ENCODE measurements at regions of chr10 and their contacts with region 1.

Region 1: DNA sequence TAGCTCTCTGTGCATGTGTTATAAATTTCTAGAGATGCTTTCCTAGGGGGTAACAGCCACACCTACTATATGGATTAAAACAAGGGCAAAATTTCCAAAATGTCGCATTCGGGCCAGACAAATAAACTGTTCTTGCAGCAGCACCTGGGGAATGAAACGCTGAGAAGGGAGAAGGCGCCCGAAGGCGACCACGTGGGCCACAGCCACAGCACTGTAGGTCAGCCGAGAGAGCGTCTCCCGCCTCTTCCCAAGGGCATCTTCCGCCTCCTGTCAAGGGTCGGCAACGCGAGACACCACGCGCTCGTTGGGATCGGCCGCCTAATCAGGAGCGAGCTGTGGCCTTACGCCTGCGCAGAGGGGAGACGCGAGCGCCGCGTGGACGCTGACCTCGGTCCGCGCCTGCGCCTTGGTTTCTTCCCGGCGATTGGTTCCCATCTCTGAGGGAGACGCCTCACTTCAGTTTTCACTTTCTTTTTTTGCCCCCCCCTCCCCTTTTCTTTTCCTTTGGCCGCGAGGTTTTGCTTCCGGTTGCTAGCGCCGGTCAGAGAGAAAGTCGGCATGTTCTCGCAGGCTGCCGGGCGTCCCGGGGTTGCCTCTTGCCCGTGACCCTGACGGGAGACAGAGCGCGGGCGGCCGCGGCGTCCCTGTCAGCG is at the start of gene TASOR2:
- DNase-seq: peak; percentile 100
- H3K4me3 ChIP-seq: peak within 1 kb of the TSS; percentile 97
- H3K4me3 Mint-ChIP-seq: peak within 1 kb of the TSS; percentile 86
- H3K27ac Mint-ChIP-seq: peak within 1 kb of the TSS; percentile 96
- H3K4me1 ChIP-seq: peaks cover 12% of the 10 kb centered on the region
- H3K4me1 Mint-ChIP-seq: peaks cover 12% of the 10 kb centered on the region
- H3K27me3 ChIP-seq: no peaks in the 10 kb centered on the region
- H3K27me3 Mint-ChIP-seq: no peaks in the 10 kb centered on the region
- CTCF ChIP-seq: no peak
- total RNA-seq, gene TASOR2: 102 and 108 TPM in 2 replicates

Region 2: GRCh38 chr10:5648584-5649457 is 35.6 kb before region 1 on chr10:
- CTCF ChIA-PET with region 1: interaction called, 10 read pairs
- POLR2A ChIA-PET with region 1: no interaction called
- intact Hi-C with region 1: no loop called
- DNase-seq: no peak
- H3K4me3 ChIP-seq: no peak overlapping the region
- H3K4me3 Mint-ChIP-seq: no peak overlapping the region
- H3K27ac Mint-ChIP-seq: no peak overlapping the region
- H3K4me1 ChIP-seq: no peaks in the 10 kb centered on the region
- H3K4me1 Mint-ChIP-seq: peaks cover 19% of the 10 kb centered on the region
- H3K27me3 ChIP-seq: no peaks in the 10 kb centered on the region
- H3K27me3 Mint-ChIP-seq: no peaks in the 10 kb centered on the region
- CTCF ChIP-seq: no peak

Region 3: DNA sequence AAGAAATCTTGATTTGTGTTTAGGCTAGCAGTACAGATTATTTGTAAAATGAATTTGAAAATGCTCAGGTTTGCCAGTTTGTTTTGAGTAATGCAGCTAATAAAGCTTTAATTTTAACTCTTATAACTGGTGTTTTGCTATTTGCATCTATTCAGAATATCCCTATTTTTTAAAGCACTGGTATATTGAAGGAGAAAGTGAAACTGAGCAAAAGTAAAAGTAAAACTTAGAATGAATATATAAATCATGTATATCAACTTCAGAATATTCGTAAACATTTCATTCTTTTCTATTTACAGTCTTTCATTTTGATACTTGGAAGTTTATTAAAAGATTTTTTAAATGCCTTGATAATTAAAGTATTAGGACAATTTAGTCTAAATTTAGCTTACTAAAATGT is 26.4 kb after region 1 on chr10:
- CTCF ChIA-PET with region 1: interaction called, 4 read pairs
- POLR2A ChIA-PET with region 1: no interaction called
- intact Hi-C with region 1: loop called (anchors 1 kb)
- DNase-seq: no peak
- H3K4me3 ChIP-seq: no peak overlapping the region
- H3K4me3 Mint-ChIP-seq: no peak overlapping the region
- H3K27ac Mint-ChIP-seq: no peak overlapping the region
- H3K4me1 ChIP-seq: peaks cover 8% of the 10 kb centered on the region
- H3K4me1 Mint-ChIP-seq: peaks cover 13% of the 10 kb centered on the region
- H3K27me3 ChIP-seq: no peaks in the 10 kb centered on the region
- H3K27me3 Mint-ChIP-seq: no peaks in the 10 kb centered on the region
- CTCF ChIP-seq: no peak

Region 4: DNA sequence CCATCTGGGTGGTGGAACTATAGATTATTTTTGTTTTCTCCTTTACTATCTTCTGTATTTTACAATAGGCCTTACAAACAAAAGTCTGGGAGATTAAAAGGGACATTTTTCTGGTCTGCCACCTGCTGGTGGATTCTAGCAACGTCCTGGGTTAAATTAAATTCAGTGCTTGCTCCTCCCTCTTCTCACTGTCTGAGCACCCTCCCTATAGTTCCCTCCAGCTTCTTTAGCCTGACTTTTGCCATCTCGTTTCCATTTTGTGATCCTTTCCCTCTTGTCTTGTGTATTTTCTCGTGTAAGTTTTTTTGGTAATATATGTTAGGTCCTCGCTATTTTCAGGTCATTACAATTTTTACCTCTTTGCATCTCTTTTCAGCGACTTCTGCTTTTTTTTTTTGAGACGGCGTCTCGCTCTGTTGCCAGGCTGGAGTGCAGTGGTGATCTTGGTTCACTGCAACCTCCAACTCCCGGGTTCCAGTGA is 189.1 kb after region 1 on chr10:
- CTCF ChIA-PET with region 1: no interaction called
- POLR2A ChIA-PET with region 1: no interaction called
- intact Hi-C with region 1: loop called (anchors 5 kb)
- DNase-seq: peak; percentile 65 to 82
- H3K4me3 ChIP-seq: no peak overlapping the region
- H3K4me3 Mint-ChIP-seq: no peak overlapping the region
- H3K27ac Mint-ChIP-seq: no peak overlapping the region
- H3K4me1 ChIP-seq: no peaks in the 10 kb centered on the region
- H3K4me1 Mint-ChIP-seq: no peaks in the 10 kb centered on the region
- H3K27me3 ChIP-seq: no peaks in the 10 kb centered on the region
- H3K27me3 Mint-ChIP-seq: no peaks in the 10 kb centered on the region
- CTCF ChIP-seq: peak; percentile 65 to 79